AG04449 (cell line): ENCODE measurements at regions of chr2 and their contacts with region 1.

Region 1: DNA sequence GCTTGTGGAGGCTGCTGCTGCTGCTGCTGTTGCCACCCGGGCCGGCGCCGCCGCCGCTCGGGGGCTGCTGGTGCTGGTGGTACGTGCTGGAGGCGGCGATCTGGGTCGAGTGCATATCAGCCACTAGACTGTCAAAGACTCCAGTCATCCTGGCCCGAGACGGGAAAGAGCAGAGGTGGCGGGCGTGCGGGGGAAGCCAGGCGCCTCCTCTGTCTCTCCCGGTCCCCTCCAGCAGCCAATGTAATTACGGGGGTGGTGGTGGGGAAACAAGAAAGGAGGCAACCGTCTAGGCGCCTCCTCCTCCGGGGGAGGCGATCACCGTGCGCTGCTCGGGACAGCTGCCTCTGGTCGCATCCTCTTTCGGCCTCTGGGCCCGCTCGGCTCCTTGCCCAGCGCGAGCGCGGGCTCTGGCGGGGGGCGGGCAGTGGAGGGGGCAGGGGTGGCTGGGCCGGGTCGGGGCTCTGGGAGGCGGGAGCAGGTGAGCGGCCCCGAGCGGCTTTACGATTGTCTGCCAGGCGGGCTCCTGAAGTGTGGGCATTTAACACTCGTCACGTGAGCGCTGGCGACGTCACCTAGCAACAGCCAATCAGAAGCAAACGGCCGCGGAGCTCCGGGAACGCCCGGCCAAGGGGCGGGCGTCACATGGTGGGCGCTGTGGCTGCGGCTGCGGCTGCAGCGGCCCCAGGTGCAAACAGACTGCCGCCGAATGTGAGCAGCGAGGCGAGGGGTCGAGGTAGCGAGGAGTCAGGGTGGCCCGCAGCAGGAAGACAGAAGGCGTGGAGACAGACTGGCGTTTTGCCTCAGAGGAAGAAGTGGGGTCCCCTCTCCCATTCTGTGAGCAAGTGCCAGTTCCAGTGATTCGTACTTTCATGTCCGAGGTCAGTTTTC is at the start of gene DLX2:
- DNase-seq: no peak
- H3K4me3 ChIP-seq: peak within 1 kb of the TSS; percentile 81
- CTCF ChIP-seq: no peak

Region 2: GRCh38 chr2:171703574-171704347 is 398.9 kb before region 1 on chr2:
- CTCF ChIA-PET with region 1: interaction called, 355 read pairs
- POLR2A ChIA-PET with region 1: interaction called, 4 read pairs
- DNase-seq: no peak
- H3K4me3 ChIP-seq: no peak overlapping the region
- CTCF ChIP-seq: peak; percentile 28

Region 3: DNA sequence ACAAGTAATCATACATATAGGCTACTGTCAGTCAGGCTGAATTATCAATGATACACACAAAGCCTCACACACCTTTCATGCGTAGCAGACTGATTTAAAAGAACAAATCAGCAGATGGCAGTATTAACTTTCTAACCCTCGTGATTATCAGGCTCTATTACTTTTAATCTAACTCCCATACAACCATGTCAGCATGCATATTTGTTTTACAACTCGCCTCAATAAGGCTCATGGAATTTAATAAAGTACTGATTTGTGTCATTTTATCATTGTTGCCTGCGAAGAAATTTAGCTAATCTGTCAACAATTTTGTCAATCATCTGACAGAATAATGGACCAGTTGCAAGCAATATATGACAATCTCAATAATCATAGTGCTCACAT is 291.4 kb before region 1 on chr2:
- CTCF ChIA-PET with region 1: interaction called, 250 read pairs
- POLR2A ChIA-PET with region 1: interaction called, 3 read pairs
- DNase-seq: no peak
- H3K4me3 ChIP-seq: no peak overlapping the region
- CTCF ChIP-seq: peak; percentile 21

Region 4: DNA sequence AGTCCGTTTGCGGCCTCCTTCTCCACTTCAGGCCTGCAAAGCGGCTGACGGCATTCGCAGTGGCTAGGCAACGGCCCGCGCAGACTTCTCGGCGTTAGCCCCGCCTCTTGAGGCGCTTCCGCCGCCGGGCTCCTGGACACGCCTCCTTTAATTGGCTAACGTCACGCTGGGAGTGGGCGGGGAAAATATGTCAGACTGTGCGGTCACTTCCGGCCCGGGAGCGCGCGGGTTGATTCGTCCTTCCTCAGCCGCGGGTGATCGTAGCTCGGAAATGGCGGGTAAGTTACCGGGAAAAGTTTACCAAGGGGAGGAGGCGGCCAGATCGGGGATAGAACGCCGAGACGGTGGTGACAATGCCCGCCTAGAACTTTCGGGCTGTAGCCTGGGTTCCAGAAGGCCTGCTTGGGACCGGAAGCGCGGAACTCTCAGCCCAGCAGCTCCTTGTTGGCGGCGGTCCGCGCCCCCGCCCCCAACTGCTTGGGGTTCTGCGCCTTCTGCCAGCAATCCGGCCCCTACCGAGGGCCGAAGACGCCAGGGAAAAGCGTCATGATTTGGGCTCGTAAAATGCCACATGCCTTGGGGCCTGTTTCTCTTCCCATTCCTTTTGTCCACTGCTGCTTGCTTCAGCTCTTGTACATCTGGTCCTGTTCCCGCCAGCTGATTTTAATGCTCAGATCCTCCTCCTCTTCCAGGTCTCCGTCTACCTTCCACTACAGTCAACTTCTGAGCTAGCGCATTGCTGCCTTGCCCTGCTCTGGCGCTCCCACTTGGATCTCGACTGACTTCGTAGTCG is 180.2 kb before region 1 on chr2 and contains the start of gene HAT1:
- CTCF ChIA-PET with region 1: interaction called, 21 read pairs
- POLR2A ChIA-PET with region 1: no interaction called
- DNase-seq: peak; percentile 73
- H3K4me3 ChIP-seq: peak within 1 kb of the TSS; percentile 88
- CTCF ChIP-seq: no peak

Region 5: GRCh38 chr2:172084734-172085459 is 17.7 kb before region 1 on chr2:
- CTCF ChIA-PET with region 1: interaction called, 18 read pairs
- POLR2A ChIA-PET with region 1: interaction called, 76 read pairs
- DNase-seq: peak; percentile 89
- H3K4me3 ChIP-seq: peak overlapping the region; percentile 68
- CTCF ChIP-seq: no peak

Region 6: GRCh38 chr2:172484253-172484652 is 381.6 kb after region 1 on chr2:
- CTCF ChIA-PET with region 1: interaction called, 17 read pairs
- POLR2A ChIA-PET with region 1: no interaction called
- DNase-seq: no peak
- H3K4me3 ChIP-seq: no peak overlapping the region
- CTCF ChIP-seq: no peak